ENCODE measurements at regions of chr6 and their contacts with region 1.

Region 1: DNA sequence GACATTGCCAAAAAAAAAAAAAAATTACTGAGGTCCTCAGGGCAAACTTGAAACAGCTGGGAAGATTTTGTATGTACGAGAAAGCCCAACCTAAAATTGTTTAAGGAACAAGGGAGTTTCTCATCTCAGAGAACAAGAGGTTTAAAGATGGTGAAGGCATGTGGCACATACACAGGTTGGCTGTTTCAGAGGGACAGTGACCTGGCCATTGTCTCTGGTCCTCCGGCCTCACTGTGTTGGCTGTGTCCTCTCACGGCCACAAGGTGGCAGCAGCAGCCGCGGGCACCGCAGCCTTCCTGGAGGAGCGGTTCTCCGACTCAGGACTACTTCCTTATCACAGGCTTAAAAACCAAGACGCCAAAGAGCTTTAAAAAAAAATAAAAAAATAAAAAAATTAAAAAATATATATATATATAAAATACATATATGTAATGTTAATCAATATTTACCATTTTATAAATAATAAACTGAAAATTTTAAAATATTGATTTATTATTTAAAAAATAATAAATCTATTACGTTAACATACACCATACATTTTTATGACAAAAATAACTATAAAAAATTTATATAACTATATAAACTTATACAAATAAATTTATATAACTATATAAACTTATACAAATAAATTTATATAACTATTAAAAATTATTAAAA is 52.8 kb downstream of the GTF2H5 start:
- DNase-seq: peak; percentile 23 to 73 (median 60)
- ATAC-seq: peak; percentile 91
- H3K4me3 ChIP-seq: no peak overlapping the region
- H3K4me3 Mint-ChIP-seq: no peak overlapping the region
- H3K27ac ChIP-seq: no peak overlapping the region
- H3K27ac Mint-ChIP-seq: peak overlapping the region in 1 of 9 donors; percentile 63
- H3K4me1 ChIP-seq: no peaks in the 10 kb centered on the region
- H3K4me1 Mint-ChIP-seq: peaks cover 0 to 13% (median 0%) of the 10 kb centered on the region in 7 donors
- H3K27me3 ChIP-seq: no peaks in the 10 kb centered on the region
- H3K27me3 Mint-ChIP-seq: peaks cover 0 to 4% (median 0%) of the 10 kb centered on the region in 5 donors

Region 2: DNA sequence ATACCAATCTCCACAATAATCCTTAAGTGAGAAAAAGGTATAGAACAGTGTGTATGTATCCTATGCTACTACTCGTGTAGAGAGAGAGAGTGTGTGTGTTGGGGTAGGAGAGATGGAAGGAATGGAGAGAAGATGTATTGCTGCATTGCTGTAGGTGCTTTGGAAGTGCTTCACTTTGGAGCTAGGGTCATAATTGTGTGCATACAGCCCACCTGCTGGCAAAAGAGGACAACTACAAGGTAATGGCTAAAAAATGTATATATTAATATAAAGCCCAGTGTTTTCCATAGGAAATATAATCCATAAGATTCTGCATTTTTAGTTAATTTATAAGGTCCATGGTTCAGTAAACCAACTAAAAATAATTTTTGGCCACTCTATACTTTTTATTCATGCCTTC is 89.0 kb before region 1 on chr6:
- CTCF ChIA-PET with region 1: no interaction called
- POLR2A ChIA-PET with region 1: no interaction called
- intact Hi-C with region 1: no loop called
- DNase-seq: peak in 1 of 9 donors; percentile 10
- ATAC-seq: peak; percentile 62
- H3K4me3 ChIP-seq: no peak overlapping the region
- H3K4me3 Mint-ChIP-seq: no peak overlapping the region
- H3K27ac ChIP-seq: no peak overlapping the region
- H3K27ac Mint-ChIP-seq: no peak overlapping the region
- H3K4me1 ChIP-seq: no peaks in the 10 kb centered on the region
- H3K4me1 Mint-ChIP-seq: no peaks in the 10 kb centered on the region
- H3K27me3 ChIP-seq: no peaks in the 10 kb centered on the region
- H3K27me3 Mint-ChIP-seq: no peaks in the 10 kb centered on the region

Region 3: DNA sequence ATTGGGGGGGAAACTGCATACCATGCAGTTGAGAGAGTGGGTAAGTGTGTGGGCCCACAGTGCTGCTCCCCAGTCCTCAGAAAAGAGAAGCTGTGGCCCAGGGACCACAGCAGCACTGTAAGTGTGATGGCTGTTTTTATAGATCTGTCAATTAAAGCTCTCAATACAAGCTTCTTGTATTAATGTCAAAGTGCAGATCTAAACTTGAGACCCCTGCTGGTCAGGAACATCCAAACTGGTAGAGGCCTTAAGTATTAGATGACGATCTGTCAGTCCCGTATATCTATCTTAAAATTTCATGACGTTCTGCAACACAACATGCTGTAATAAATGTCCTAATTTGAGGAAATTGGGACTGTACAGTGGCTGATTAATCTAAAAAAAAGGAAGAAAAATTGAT is 166.1 kb after region 1 on chr6:
- CTCF ChIA-PET with region 1: interaction called, 5 read pairs
- POLR2A ChIA-PET with region 1: no interaction called
- intact Hi-C with region 1: loop called (anchors 1 kb)
- DNase-seq: peak in 4 of 9 donors; percentile 5 to 17 (median 10)
- ATAC-seq: peak; percentile 20
- H3K4me3 ChIP-seq: no peak overlapping the region
- H3K4me3 Mint-ChIP-seq: no peak overlapping the region
- H3K27ac ChIP-seq: no peak overlapping the region
- H3K27ac Mint-ChIP-seq: no peak overlapping the region
- H3K4me1 ChIP-seq: no peaks in the 10 kb centered on the region
- H3K4me1 Mint-ChIP-seq: peaks cover 0 to 24% (median 16%) of the 10 kb centered on the region in 7 donors
- H3K27me3 ChIP-seq: no peaks in the 10 kb centered on the region
- H3K27me3 Mint-ChIP-seq: no peaks in the 10 kb centered on the region

Region 4: GRCh38 chr6:158518191-158519127 is 297.5 kb after region 1 on chr6:
- CTCF ChIA-PET with region 1: interaction called, 3 read pairs
- POLR2A ChIA-PET with region 1: no interaction called
- intact Hi-C with region 1: loop called (anchors 1 to 2 kb)
- DNase-seq: peak in 7 of 9 donors; percentile 34 to 56 (median 38)
- ATAC-seq: peak; percentile 86
- H3K4me3 ChIP-seq: peak overlapping the region; percentile 31
- H3K4me3 Mint-ChIP-seq: peak overlapping the region; percentile 63 to 92 (median 82)
- H3K27ac ChIP-seq: no peak overlapping the region
- H3K27ac Mint-ChIP-seq: peak overlapping the region in 6 of 9 donors; percentile 18 to 86 (median 28)
- H3K4me1 ChIP-seq: peaks cover 16 to 17% of the 10 kb centered on the region in 2 donors
- H3K4me1 Mint-ChIP-seq: peaks cover 23 to 43% (median 38%) of the 10 kb centered on the region in 7 donors
- H3K27me3 ChIP-seq: no peaks in the 10 kb centered on the region
- H3K27me3 Mint-ChIP-seq: peaks cover 3 to 26% (median 23%) of the 10 kb centered on the region in 5 donors

Region 5: GRCh38 chr6:158605266-158605878 is 384.5 kb after region 1 on chr6:
- CTCF ChIA-PET with region 1: interaction called, 10 read pairs
- POLR2A ChIA-PET with region 1: no interaction called
- intact Hi-C with region 1: loop called in 1 of 2 experiments (anchors 1 kb)
- DNase-seq: peak in 8 of 9 donors; percentile 31 to 57 (median 44)
- ATAC-seq: peak; percentile 85
- H3K4me3 ChIP-seq: no peak overlapping the region
- H3K4me3 Mint-ChIP-seq: no peak overlapping the region
- H3K27ac ChIP-seq: no peak overlapping the region
- H3K27ac Mint-ChIP-seq: peak overlapping the region in 8 of 9 donors; percentile 5 to 83 (median 66)
- H3K4me1 ChIP-seq: no peaks in the 10 kb centered on the region
- H3K4me1 Mint-ChIP-seq: peaks cover 0 to 19% (median 7%) of the 10 kb centered on the region in 7 donors
- H3K27me3 ChIP-seq: no peaks in the 10 kb centered on the region
- H3K27me3 Mint-ChIP-seq: no peaks in the 10 kb centered on the region